ENCODE measurements at regions of chr4 and their contacts with region 1.

Region 1: GRCh38 chr4:27318743-27319142 is 458.1 kb downstream of the STIM2 start:
- ATAC-seq: peak in 3 of 8 experiments; percentile 62 to 92 (median 90)
- H3K4me3 ChIP-seq: no peak overlapping the region
- H3K27ac ChIP-seq: no peak overlapping the region
- H3K4me1 ChIP-seq: no peaks in the 10 kb centered on the region

Region 2: GRCh38 chr4:27066601-27067000 is 252.1 kb before region 1 on chr4:
- in situ Hi-C with region 1: loop called in 2 of 9 experiments (anchors 25 kb)
- ATAC-seq: no peak
- H3K4me3 ChIP-seq: no peak overlapping the region
- H3K27ac ChIP-seq: no peak overlapping the region
- H3K4me1 ChIP-seq: no peaks in the 10 kb centered on the region

Region 3: DNA sequence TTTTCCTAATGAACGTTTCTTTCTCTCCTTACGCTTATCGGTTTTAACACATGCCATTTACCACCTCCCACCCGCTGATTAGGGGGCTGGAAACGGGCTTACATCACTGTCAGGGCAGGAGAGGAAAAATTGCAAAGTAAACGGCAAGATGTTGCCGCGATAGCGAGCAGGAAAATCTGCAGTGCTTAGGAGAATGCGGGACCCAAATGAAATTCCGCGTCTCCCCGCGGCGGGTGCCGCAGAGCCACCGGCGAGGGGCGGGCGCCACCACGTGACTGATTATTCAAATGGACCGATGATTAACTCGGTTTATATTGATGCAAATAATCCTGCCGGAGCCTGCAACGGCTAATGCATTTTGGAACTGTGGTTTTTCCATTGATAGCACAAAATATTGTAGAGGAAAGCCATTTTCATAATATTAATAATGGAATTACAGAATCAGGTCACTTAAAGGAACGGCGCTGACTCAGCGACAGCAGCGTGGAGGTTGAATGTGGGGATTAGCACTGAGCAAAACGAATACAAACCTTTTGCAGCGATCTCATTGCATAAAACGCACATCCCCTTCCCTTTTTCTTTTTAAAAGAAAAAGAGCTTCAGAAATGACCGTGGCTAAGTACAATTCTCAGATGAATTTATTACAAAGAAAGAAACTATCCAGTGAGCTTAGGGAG is 233.9 kb before region 1 on chr4:
- in situ Hi-C with region 1: loop called in 1 of 9 experiments (anchors 25 kb)
- ATAC-seq: peak; percentile 53 to 91 (median 86)
- H3K4me3 ChIP-seq: peak overlapping the region; percentile 28 to 39 (median 33)
- H3K27ac ChIP-seq: peak overlapping the region; percentile 26 to 45
- H3K4me1 ChIP-seq: peaks cover 15 to 18% of the 10 kb centered on the region in 2 donors